Right ventricle myocardium inferior (tissue), 1 donor: ENCODE measurements at regions of chr2 and their contacts with region 1.

Region 1: GRCh38 chr2:134790487-134790886 is 47.9 kb upstream of the ACMSD start:
- DNase-seq: no peak
- ATAC-seq: no peak

Region 2: DNA sequence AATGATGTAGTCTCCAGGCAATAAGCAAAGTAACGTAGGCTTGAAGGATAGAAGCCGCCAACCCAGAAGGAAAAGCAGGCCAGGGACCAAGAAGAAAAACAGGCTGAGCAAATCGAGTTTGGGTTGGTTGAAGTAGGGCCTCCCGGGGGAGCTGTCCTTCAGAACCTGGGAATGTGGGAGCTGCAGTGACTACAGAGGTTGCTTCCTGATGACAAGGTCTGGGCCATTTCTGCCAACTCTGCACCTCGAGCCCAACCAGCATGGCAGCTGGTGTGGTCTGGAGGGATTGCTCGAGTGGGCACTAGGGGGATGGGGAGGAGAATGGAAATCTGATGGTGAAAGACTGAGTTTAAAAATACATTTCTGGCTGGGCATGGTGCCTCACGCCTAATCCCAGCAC is 62.0 kb after region 1 on chr2:
- intact Hi-C with region 1: loop called (anchors 5 kb)
- DNase-seq: no peak
- ATAC-seq: no peak